ENCODE measurements at regions of chr11 and their contacts with region 1.

Region 1: DNA sequence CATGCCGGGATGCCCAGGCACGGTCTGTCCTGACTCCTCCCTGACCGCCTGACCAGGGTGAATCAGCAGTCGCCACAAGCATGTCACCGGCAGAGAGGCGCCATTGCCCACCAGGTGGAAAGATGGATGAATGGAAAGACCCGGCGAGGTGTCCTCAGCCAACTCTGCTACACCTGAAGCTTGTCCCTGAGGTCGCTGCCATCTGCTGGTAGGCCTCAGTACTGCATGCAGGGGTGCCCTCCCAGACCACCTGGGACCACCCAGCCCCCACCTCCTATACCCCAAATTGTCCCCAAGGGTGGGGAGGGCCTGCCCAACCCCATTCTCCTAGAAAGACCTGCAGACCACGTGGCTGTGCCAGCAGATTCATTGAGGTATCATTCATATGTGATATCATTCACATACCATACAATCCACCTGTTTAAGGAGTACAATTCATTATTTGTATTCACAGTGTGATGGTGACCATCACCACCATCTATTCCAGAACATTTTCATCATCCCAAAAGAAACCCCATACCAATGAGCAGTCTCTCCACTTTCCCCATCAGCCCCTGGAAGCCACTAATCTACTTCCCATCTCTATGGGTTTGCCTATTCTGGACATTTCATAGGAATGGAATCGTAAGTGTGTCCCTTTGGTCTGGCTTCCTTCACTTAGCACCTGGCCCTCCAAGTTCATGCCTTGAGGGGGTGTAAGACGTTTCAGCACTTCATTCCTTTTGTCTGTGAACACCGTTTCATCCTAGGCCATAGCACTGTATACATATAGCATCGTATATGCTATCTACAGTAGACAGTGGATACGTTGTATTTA is 17.5 kb downstream of the FGF3 start:
- DNase-seq: no peak
- H3K4me3 ChIP-seq: no peak overlapping the region
- CTCF ChIP-seq: peak; percentile 86

Region 2: GRCh38 chr11:69744435-69744834 is 57.3 kb before region 1 on chr11:
- in situ Hi-C with region 1: loop called (anchors 10 kb)
- DNase-seq: peak; percentile 73
- H3K4me3 ChIP-seq: no peak overlapping the region
- CTCF ChIP-seq: no peak